ENCODE measurements at regions of chr11 and their contacts with region 1.

Region 1: GRCh38 chr11:117807482-117808327 is 10.7 kb upstream of the DSCAML1 start:
- DNase-seq: peak; percentile 91
- H3K4me3 ChIP-seq: no peak overlapping the region
- H3K27ac ChIP-seq: no peak overlapping the region
- H3K4me1 ChIP-seq: peaks cover 9% of the 10 kb centered on the region
- H3K27me3 ChIP-seq: no peaks in the 10 kb centered on the region
- CTCF ChIP-seq: peak; percentile 86 to 91 (median 88)
- POLR2A ChIP-seq: no peak

Region 2: DNA sequence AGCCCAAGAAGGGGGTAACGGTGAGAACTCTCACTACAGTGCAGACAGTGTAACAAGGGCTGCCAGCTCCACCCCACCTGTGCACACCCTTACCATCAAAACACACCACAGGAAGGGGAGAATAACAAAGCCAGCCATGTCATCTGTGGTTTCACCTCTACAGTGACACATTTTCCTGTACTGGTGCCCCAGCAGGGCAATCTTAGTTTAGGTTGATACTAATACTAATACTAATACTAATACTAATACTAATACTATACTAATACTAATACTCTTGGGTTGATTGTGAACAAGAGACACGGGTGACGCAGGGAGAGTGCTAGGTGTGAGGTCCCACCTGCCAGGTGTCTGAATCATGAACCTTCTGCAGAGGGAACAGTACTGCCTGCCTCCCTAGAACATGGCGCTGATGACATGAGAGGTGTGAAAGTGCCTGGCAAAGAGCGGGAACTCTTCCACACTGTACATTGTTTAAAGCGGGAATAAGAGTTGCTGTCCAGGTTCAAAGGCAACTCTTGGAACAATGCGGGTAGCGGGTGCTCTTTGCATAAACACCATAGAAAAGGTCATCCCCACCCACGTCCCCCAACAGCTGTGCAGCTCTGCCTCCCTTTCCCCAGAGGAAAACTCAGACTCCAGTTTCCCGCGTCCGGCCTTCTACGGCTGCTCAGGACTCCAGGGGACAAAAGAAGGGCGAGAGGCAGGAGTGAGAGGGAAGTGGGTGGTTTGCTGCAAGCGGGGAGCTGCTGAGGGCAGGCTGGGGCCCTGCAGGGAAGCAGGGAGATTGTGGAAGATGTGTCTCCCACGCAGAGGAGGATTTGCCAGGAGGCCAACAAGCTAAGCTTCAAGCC is 244.1 kb after region 1 on chr11:
- intact Hi-C with region 1: loop called (anchors 10 kb)
- DNase-seq: no peak
- H3K4me3 ChIP-seq: no peak overlapping the region
- H3K27ac ChIP-seq: no peak overlapping the region
- H3K4me1 ChIP-seq: no peaks in the 10 kb centered on the region
- H3K27me3 ChIP-seq: no peaks in the 10 kb centered on the region
- CTCF ChIP-seq: no peak
- POLR2A ChIP-seq: no peak